Activated T-helper 1 cell treated with anti-CD3 and anti-CD28 coated beads, Interleukin-12 subunit alpha, Interleukin-12 subunit beta, Interleukin-2, Interleukin-4 antibody, amounts not matched to agents 30 ng/mL and 10 ng/mL and 1 ng/mL, durations not matched to agents 14 hours and 24 hours and 36 hours (primary cell): ENCODE measurements at regions of chr15 and their contacts with region 1.

Region 1: DNA sequence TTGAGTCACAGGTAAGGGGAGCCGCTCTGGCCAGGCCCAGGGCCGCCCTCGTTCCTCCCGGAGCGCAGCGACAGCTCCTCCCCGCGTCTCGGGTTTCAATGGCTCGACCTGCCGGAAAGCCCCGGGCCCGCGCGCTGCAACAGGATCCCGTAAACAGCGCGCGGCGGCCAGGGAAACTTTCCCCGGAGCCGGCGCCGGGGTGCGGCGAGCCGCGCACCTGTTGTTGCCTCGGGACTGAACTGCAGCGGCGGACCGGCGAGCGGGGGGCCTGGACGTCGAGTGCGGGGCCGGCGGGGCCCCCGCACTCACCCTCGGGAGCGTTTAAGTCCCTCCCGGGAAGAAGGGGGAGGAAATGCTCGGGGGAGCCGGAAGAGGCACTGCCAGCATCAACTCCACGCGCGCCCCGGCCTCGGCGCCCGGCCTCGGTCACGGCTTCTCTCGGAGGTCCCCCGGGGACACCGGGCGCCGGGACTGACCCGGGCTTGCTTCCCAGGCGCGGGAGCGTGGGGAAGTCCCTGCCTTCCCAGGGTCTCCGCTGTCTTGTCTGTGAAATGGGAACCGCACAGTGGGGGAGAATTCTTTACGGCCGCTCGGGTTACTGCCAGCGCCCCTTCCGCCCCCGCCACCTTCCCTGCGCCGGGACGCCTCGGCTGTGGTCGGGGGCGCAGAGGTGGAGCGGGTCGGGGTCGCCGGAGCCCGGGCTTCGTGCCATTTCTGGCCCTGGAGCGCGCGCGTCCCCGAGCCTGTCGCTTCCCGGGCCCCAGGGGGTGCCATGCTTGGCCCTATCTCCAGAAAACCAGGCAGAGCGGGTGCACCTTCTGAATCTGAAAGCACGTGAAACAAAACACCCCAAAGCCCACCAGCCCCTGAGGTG is 7.4 kb upstream of the PGPEP1L start:
- DNase-seq: peak; percentile 60
- H3K4me3 Mint-ChIP-seq: peak overlapping the region; percentile 74
- H3K27ac Mint-ChIP-seq: peak overlapping the region; percentile 78
- H3K4me1 Mint-ChIP-seq: no peaks in the 10 kb centered on the region
- H3K27me3 Mint-ChIP-seq: peaks cover 38% of the 10 kb centered on the region

Region 2: DNA sequence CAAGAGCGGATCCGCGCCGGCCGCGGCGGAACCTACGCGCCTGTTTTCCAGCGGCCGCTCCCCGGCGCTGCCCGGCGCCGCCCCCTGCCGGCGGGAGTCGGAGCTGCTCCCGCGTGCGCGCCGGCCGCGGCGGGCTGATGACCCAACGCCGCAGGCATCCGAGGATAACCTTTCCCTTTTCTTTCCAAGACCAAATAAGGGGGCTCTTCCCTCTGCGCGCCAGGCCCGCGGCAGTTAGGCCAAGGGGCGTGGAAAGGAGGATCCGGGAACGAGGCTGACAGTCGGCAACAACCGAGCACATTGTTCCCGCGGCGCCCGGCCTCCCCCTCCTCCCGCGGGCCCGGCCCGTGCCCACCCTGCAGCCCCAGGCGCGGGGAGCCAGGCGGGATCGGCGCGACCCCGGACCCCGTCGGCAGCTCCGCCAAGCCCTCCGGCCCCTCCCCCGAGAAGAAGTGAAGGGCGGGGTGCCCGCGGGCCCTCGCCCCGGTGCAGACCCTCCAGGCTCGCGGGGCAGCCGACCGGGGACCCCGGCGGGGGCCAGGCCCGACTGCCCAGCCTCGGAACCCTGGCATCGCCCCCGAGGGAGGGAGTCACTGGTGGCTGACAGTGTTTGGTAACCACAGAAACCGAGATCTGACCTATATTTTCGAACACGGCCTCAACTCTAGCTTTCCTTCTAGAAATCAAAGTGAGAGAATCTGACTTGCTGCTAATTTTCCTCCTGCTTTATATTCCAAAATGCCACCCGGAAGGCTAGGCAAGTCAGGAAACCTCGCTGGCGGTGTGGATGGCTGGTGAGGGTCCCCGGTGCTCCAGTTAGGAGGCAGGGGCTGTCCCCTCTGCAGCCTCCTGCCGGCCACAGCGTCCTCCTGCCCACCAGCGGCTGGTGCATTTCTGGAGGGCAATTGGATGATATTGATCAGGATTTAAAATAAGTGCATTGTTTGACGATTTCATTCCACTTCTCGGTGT is 44.3 kb after region 1 on chr15:
- intact Hi-C with region 1: loop called (anchors 2 kb)
- DNase-seq: peak; percentile 48
- H3K4me3 Mint-ChIP-seq: peak overlapping the region; percentile 70
- H3K27ac Mint-ChIP-seq: no peak overlapping the region
- H3K4me1 Mint-ChIP-seq: peaks cover 8% of the 10 kb centered on the region
- H3K27me3 Mint-ChIP-seq: peaks cover 29% of the 10 kb centered on the region

Region 3: DNA sequence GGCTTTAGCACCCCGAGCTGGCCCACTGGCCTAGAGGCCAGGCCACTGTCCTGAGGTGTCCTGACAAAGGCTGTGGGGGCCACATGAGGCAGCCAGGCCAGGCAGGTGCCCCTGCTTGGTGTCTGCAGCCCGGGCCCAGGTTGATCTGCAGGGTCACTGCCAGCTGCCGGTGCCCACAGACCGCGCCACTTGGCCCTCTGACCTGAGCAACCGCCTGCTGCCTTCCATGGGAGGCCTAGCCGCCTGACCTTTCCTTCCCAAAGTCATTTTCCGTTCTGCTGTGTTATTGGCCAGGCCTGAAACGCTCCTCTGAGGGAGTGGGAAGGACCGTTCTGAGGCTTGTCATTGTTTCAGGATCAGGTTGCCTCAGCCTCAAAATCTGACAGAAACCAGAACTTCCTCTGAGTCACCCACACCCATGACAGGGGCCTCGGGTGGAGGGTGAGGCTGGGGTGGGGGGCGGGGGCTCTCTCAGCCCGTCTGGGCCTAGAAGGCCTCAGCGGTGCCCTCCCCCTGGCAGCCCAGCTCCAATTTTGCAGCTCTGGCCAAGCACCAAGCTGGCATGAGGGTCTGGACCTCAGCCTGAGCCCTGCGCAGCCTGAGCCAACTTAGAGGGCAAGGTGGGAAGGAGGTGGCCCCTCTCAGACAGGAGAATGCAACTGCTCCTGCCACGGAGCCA is 410.1 kb after region 1 on chr15:
- intact Hi-C with region 1: no loop called
- DNase-seq: peak; percentile 49
- H3K4me3 Mint-ChIP-seq: peak overlapping the region; percentile 68
- H3K27ac Mint-ChIP-seq: peak overlapping the region; percentile 92
- H3K4me1 Mint-ChIP-seq: peaks cover 63% of the 10 kb centered on the region
- H3K27me3 Mint-ChIP-seq: no peaks in the 10 kb centered on the region